Motor neuron (in vitro differentiated cells): ENCODE measurements at regions of chr3 and their contacts with region 1.

Region 1: DNA sequence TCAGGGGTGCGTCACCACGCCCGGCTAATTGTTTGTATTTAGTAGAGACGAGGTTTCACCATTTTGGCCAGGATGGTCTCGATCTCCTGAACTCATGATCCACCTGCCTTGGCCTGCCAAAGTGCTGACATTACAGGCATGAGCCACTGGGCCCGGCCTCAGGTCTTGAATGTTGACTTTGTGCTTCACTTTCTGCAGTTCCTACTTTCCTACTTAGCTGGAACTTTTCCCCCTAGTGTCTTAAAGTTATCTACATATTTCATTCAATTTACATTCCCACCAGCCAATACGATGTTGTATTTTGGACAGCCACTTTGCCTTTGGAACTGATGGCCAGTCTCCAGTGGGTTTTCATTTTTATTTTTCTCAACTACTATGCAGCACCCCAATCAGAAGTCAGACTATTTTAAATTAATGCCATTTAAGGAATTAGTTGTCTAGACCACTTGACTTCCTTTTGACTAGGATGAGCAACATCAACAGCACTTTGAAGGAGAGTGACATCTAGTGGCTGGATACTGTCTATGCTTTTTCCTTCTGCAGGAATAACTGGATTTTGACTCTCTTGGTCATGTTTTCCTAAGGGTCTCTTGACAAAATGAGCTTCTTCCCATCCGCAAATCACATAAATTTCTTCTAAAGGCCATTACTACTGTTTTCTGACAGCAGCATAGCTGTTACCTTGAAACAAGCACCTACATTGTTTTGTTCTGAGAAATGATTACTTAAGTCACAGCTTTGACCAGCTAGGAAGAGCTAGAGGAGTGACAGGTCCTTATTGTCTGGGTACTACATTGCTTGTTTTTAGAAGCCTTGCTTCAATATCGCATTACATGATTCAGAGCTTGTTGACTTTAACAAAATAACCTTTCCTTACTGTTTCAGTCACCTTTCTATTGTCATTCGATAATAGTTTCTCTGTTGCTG is 140.2 kb downstream of the ITPR1 start:
- ATAC-seq: peak in 6 of 8 experiments; percentile 37 to 80 (median 62)
- H3K4me3 ChIP-seq: no peak overlapping the region
- H3K27ac ChIP-seq: no peak overlapping the region
- H3K4me1 ChIP-seq: no peaks in the 10 kb centered on the region

Region 2: GRCh38 chr3:4340411-4341335 is 292.7 kb before region 1 on chr3:
- in situ Hi-C with region 1: loop called in 1 of 9 experiments (anchors 25 kb)
- ATAC-seq: peak in 6 of 8 experiments; percentile 8 to 68 (median 56)
- H3K4me3 ChIP-seq: no peak overlapping the region
- H3K27ac ChIP-seq: no peak overlapping the region
- H3K4me1 ChIP-seq: peaks cover 3 to 12% of the 10 kb centered on the region in 2 donors

Region 3: GRCh38 chr3:4350789-4351163 is 282.6 kb before region 1 on chr3:
- in situ Hi-C with region 1: loop called in 7 of 9 experiments (anchors 10 to 25 kb)
- ATAC-seq: peak in 5 of 8 experiments; percentile 44 to 81 (median 65)
- H3K4me3 ChIP-seq: no peak overlapping the region
- H3K27ac ChIP-seq: no peak overlapping the region
- H3K4me1 ChIP-seq: peaks cover 0 to 5% of the 10 kb centered on the region in 2 donors

Region 4: GRCh38 chr3:4466741-4467521 is 166.4 kb before region 1 on chr3 and contains the start of gene SUMF1:
- in situ Hi-C with region 1: no loop called
- ATAC-seq: peak; percentile 97 to 99 (median 98)
- H3K4me3 ChIP-seq: peak within 1 kb of the TSS; percentile 69 to 98 (median 94)
- H3K27ac ChIP-seq: peak within 1 kb of the TSS; percentile 75 to 87
- H3K4me1 ChIP-seq: peaks cover 5 to 8% of the 10 kb centered on the region in 2 donors
- total RNA-seq, gene SUMF1: 3.1 to 52.6 (median 12.1) TPM

Region 5: DNA sequence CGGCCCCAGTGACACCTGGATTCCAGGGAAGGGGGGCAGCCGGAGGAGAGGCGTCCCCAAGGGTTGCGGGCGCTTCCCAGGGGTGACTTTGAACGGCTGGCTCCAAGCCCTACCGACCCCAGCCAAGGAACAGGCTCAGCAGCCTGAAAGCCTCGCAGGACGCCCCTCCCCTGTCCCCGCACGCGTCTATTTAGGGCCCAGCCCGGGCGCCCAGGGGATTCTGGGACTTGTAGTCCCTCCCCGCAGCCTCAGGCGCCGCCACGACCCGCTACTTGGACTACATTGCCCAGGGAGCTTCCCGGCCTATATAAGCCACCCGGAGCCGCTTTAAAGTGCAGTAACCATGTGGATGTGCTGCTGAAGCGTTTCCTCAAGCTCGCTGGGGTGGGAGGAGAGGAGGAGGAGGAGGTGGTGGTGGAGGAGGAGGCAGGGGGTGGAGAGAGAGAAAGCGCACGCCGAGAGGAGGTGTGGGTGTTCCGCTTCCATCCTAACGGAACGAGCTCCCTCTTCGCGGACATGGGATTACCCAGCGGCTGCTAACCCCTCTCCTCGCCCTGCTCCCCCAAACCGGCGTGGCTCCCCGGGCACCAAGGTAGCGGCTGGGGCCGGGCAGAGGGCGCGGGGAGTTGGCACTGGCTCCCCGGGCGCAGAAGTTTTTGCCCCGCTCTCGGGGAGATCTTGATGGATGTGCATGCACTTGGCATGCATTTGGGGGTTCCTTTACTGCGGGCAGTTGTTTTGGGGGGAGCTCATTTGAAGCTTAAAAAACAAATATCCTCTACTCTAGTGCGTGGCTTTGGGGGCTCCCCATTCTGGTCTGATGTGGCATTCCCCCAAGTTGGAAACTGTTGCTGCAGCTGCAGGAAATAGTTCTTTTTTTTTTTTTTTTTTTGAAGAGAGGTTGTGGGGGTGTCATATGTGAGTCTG is 140.1 kb before region 1 on chr3 and contains the start of gene ITPR1:
- in situ Hi-C with region 1: loop called in 1 of 9 experiments (anchors 10 kb)
- ATAC-seq: peak; percentile 90 to 98 (median 96)
- H3K4me3 ChIP-seq: peak within 1 kb of the TSS; percentile 71 to 94 (median 81)
- H3K27ac ChIP-seq: no peak within 1 kb of the TSS
- H3K4me1 ChIP-seq: peaks cover 2 to 4% of the 10 kb centered on the region in 2 donors
- total RNA-seq, gene ITPR1: 2.2 to 167 (median 12.2) TPM